Activated CD4-positive, alpha-beta memory T cell treated with anti-CD3 and anti-CD28 coated beads for 36 hours (primary cell): ENCODE measurements at regions of chr15 and their contacts with region 1.

Region 1: GRCh38 chr15:33021806-33022389 is 172.6 kb downstream of the FMN1 start:
- DNase-seq: no peak
- H3K4me3 Mint-ChIP-seq: no peak overlapping the region
- H3K27ac Mint-ChIP-seq: no peak overlapping the region
- H3K4me1 Mint-ChIP-seq: no peaks in the 10 kb centered on the region
- H3K27me3 Mint-ChIP-seq: no peaks in the 10 kb centered on the region

Region 2: GRCh38 chr15:33007303-33007855 is 14.5 kb before region 1 on chr15:
- CTCF ChIA-PET with region 1: no interaction called
- POLR2A ChIA-PET with region 1: no interaction called
- intact Hi-C with region 1: no loop called
- DNase-seq: no peak
- H3K4me3 Mint-ChIP-seq: no peak overlapping the region
- H3K27ac Mint-ChIP-seq: no peak overlapping the region
- H3K4me1 Mint-ChIP-seq: no peaks in the 10 kb centered on the region
- H3K27me3 Mint-ChIP-seq: peaks cover 8% of the 10 kb centered on the region

Region 3: GRCh38 chr15:33059184-33059583 is 37.3 kb after region 1 on chr15:
- CTCF ChIA-PET with region 1: no interaction called
- POLR2A ChIA-PET with region 1: no interaction called
- intact Hi-C with region 1: no loop called
- DNase-seq: no peak
- H3K4me3 Mint-ChIP-seq: no peak overlapping the region
- H3K27ac Mint-ChIP-seq: no peak overlapping the region
- H3K4me1 Mint-ChIP-seq: no peaks in the 10 kb centered on the region
- H3K27me3 Mint-ChIP-seq: peaks cover 4% of the 10 kb centered on the region

Region 4: DNA sequence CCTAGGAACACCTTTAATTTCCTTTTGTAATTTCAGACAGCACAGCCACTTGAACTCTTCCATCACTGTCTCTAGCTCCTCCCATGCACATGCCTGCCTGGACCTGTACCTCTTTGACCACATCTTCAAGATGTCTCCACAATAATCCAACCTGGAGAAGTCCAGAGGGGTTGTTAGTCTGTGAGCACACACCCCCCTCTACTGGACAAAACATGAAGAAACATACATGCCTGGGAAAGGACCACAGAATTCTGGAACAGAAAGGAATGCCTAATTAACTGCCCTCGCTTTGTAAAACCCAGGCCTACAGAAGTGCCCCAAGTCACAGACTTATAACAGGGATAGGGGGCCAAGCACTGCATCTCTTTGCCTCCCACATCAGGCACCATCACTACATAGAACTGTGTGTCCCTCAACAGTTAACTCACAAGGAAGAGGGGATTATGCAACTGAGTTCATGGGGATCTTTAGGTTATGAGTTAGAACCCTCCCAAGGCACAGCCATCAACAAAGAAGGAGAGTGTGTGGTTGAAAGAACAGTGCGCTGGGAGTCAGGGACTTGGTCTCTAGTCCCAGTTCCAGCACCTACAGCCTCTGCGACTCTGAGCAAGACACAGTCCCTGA is 110.9 kb after region 1 on chr15:
- CTCF ChIA-PET with region 1: interaction called, 15 read pairs
- POLR2A ChIA-PET with region 1: no interaction called
- intact Hi-C with region 1: no loop called
- DNase-seq: no peak
- H3K4me3 Mint-ChIP-seq: no peak overlapping the region
- H3K27ac Mint-ChIP-seq: no peak overlapping the region
- H3K4me1 Mint-ChIP-seq: no peaks in the 10 kb centered on the region
- H3K27me3 Mint-ChIP-seq: no peaks in the 10 kb centered on the region